Prostate gland (tissue), 2 donors: ENCODE measurements at regions of chr5 and their contacts with region 1.

Region 1: GRCh38 chr5:123423278-123424149 is at the start of gene CEP120:
- DNase-seq: peak; percentile 99
- H3K4me3 ChIP-seq: peak within 1 kb of the TSS; percentile 61 to 68
- H3K27ac ChIP-seq: peak within 1 kb of the TSS; percentile 81 to 85
- H3K4me1 ChIP-seq: no peaks in the 10 kb centered on the region
- H3K27me3 ChIP-seq: no peaks in the 10 kb centered on the region
- CTCF ChIP-seq: peak; percentile 66 to 89 (median 78)
- POLR2A ChIP-seq: peak; percentile 85
- total RNA-seq, gene CEP120: 14.5 to 37.5 TPM

Region 2: GRCh38 chr5:123249446-123249845 is 174.1 kb before region 1 on chr5:
- intact Hi-C with region 1: no loop called
- DNase-seq: no peak
- H3K4me3 ChIP-seq: no peak overlapping the region
- H3K27ac ChIP-seq: no peak overlapping the region
- H3K4me1 ChIP-seq: no peaks in the 10 kb centered on the region
- H3K27me3 ChIP-seq: no peaks in the 10 kb centered on the region
- CTCF ChIP-seq: no peak
- POLR2A ChIP-seq: no peak

Region 3: GRCh38 chr5:123265551-123265950 is 158.0 kb before region 1 on chr5:
- intact Hi-C with region 1: no loop called
- DNase-seq: no peak
- H3K4me3 ChIP-seq: no peak overlapping the region
- H3K27ac ChIP-seq: no peak overlapping the region
- H3K4me1 ChIP-seq: no peaks in the 10 kb centered on the region
- H3K27me3 ChIP-seq: no peaks in the 10 kb centered on the region
- CTCF ChIP-seq: no peak
- POLR2A ChIP-seq: no peak

Region 4: DNA sequence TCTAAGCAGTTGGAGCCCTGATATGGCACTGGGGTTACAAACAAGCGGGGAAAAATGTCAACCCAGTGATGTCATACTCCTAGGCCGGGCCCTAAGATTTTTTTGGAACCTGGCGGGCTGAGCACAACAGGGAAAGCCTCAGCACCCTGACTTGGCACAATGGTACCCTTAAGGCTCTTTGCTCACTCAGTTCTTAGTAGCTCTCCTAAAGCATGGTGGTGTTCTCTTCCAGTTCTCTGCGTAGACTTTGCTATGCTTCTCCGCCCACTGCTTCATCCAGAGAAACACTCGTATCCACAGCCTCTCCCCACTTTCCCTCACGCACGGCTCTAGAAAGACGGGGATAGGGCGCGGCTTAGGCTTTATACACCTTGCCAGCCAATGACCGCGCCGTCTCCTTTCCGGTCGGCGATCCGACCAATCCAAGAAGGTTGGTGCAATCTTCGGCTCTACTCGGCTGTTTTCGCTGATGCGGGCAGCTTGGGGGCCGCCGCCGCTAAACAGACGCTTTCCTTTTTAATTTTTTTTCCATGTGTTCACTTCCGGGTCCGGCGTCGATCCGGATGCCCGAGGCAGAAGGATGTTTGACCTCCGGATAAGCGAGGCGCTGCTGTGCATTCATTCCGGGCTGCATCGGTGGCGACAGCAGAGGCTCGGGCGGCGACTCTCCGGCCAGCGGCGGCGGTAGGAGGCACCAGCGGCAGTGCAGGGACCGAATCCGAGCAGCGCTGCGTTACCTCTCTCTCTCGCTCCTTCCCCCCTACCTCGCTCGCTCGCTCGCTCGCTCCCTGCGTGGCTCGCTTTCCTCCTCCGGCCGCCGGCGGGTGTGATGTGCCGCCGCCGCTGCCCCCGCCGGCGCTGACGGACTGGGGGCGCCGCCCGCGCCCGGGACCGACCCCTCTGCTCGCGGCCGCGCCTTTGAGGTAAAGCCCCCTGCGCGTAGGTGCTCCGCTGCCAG is 88.4 kb after region 1 on chr5 and contains the start of gene CSNK1G3:
- intact Hi-C with region 1: loop called (anchors 2 kb)
- DNase-seq: peak; percentile 95
- H3K4me3 ChIP-seq: peak within 1 kb of the TSS; percentile 90 to 91
- H3K27ac ChIP-seq: peak within 1 kb of the TSS; percentile 89 to 91
- H3K4me1 ChIP-seq: no peaks in the 10 kb centered on the region
- H3K27me3 ChIP-seq: no peaks in the 10 kb centered on the region
- CTCF ChIP-seq: peak in 1 of 4 experiments; percentile 9
- POLR2A ChIP-seq: peak; percentile 75
- total RNA-seq, gene CSNK1G3: 37.1 to 43.1 TPM